Upper lobe of right lung (tissue), 1 donor: ENCODE measurements at regions of chr16 and their contacts with region 1.

Region 1: DNA sequence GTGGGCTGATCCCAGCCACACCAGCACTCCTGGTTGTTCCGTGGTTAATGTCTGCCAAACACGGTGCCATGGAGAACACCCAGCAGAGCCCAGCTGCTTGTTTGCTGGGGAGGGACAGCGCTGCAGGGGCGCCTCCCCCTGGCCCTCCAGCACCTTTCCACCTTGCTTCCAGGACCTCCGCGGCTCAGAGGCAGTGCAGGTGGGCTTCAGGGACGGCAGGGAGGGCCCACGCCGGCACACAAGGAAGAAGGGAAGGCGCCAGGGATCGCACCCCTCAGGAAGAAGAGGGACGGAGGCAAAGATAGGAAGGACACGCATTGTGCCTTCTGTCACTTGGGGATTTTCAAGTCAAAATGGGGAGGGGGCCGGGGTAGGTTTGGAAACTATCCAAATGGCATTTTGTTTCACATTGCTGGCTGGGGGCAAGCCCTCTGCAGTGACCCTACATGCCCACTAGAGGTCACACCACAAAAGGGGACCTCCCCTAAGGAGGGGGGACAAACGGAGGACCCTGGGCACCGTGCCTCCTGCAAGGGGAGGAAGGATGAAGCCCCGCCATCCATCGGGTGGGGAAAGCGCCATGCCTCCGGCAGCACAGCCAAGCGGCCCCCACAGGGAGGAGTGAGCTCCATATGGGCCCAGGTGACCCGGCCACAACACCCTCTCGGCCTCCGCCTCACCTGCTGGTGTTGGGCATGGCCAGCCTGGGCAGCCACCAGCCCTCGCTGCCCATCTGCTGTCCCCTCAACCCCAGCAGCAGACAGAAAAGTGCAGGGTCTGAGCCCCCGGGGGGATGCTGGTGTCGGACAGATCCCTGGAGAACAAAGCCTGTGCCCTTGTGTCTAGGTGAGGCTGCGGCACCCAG is 7.5 kb upstream of the C16orf95 start:
- DNase-seq: no peak
- ATAC-seq: peak; percentile 69
- H3K4me3 ChIP-seq: no peak overlapping the region
- H3K27ac ChIP-seq: no peak overlapping the region
- H3K4me1 ChIP-seq: peaks cover 3% of the 10 kb centered on the region
- H3K27me3 ChIP-seq: no peaks in the 10 kb centered on the region
- CTCF ChIP-seq: peak; percentile 83

Region 2: GRCh38 chr16:87387942-87388817 is 63.5 kb after region 1 on chr16:
- intact Hi-C with region 1: loop called (anchors 10 kb)
- DNase-seq: peak; percentile 91
- ATAC-seq: peak; percentile 72
- H3K4me3 ChIP-seq: peak overlapping the region; percentile 34
- H3K27ac ChIP-seq: peak overlapping the region; percentile 87
- H3K4me1 ChIP-seq: peaks cover 22% of the 10 kb centered on the region
- H3K27me3 ChIP-seq: no peaks in the 10 kb centered on the region
- CTCF ChIP-seq: no peak

Region 3: GRCh38 chr16:87648236-87648635 is 323.6 kb after region 1 on chr16:
- intact Hi-C with region 1: loop called (anchors 10 kb)
- DNase-seq: no peak
- ATAC-seq: no peak
- H3K4me3 ChIP-seq: no peak overlapping the region
- H3K27ac ChIP-seq: no peak overlapping the region
- H3K4me1 ChIP-seq: no peaks in the 10 kb centered on the region
- H3K27me3 ChIP-seq: peaks cover 10% of the 10 kb centered on the region
- CTCF ChIP-seq: no peak